PC-3 (cell line): ENCODE measurements at regions of chr15 and their contacts with region 1.

Region 1: DNA sequence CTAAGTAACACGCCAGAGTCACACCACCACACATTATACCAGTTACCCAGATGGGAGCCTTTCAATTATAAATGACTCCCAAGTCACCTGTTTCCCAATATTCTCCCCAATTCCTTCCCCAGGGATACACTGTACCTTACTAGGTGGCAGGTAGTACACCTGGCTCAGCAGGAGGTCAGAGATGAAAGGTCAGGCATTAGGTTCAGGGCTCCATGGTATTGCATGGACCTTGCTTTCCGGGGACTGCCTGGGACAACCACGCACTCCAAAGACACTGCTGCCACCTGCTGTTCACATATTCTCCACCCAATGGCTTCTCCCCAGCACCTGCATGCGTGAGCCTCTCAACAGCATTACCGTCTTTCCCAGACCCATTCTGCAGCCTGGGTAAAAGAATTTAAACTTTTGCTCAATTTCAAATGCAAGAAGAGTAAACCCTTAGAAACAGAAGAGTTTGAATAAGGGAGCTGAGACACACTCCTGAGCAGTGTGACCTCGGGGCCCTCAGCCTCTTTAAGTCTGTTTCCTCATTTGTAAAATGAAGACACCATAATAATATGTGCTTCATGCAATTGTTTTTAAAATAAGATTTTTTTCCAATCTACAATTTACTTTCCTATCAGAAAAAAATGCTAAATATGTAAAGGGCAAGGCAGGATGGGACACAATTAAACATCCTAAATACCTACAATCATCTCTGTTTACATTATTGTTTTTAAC is 28.0 kb upstream of the LACTB start:
- DNase-seq: peak; percentile 74
- ATAC-seq: peak; percentile 89
- H3K4me3 ChIP-seq: no peak overlapping the region
- H3K27ac ChIP-seq: no peak overlapping the region
- H3K4me1 ChIP-seq: peaks cover 5% of the 10 kb centered on the region; the same call in 1 of the 2 replicates
- H3K27me3 ChIP-seq: no peaks in the 10 kb centered on the region
- CTCF ChIP-seq: peak; percentile 84

Region 2: GRCh38 chr15:62782039-62782791 is 311.4 kb before region 1 on chr15:
- CTCF ChIA-PET with region 1: no interaction called
- POLR2A ChIA-PET with region 1: no interaction called
- intact Hi-C with region 1: loop called (anchors 1 kb)
- DNase-seq: peak; percentile 70
- ATAC-seq: peak; percentile 82
- H3K4me3 ChIP-seq: no peak overlapping the region
- H3K27ac ChIP-seq: no peak overlapping the region
- H3K4me1 ChIP-seq: peaks cover 9% of the 10 kb centered on the region; the same call in 1 of the 2 replicates
- H3K27me3 ChIP-seq: no peaks in the 10 kb centered on the region
- CTCF ChIP-seq: peak; percentile 74